ENCODE measurements at regions of chr20 and their contacts with region 1.

Region 1: GRCh38 chr20:33837998-33838864 is 27.1 kb downstream of the CHMP4B start:
- DNase-seq: no peak
- CTCF ChIP-seq: peak; percentile 32

Region 2: DNA sequence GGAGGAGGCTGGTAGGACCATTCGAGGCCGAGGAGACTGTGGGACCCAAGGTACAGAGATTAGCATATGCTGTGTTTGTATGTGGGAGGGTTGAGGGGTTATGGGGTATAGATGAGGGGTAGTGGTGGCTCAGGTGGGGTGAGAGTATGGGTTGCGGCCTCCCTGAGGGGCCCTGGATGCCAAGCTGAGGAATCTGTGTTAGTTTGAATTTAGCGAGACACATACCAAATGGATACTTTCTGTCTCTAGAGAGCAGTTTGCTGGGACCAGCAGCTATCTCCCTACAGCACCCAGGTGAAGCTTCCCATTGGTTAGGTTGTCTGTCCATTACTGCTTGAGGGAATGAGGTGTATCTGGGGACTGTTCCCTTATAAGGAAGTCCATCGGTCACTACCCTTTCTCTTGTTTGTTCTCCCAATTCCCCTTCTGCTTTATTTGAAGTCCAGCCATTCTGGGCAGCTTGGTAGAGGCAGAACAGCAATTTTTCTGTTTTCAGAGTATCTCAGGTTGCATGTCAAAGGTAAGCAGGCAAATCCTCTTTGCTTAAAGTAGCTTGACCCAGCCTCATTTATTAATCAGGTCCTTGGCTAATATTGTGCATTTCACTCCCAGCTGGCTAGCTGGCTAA is 11.8 kb before region 1 on chr20:
- CTCF ChIA-PET with region 1: interaction called, 21 read pairs
- POLR2A ChIA-PET with region 1: no interaction called
- DNase-seq: no peak
- CTCF ChIP-seq: no peak

Region 3: GRCh38 chr20:33852626-33853506 is 14.6 kb after region 1 on chr20:
- CTCF ChIA-PET with region 1: interaction called, 18 read pairs
- POLR2A ChIA-PET with region 1: no interaction called
- DNase-seq: no peak
- CTCF ChIP-seq: no peak